GM12878 (cell line): ENCODE measurements at regions of chr2 and their contacts with region 1.

Region 1: DNA sequence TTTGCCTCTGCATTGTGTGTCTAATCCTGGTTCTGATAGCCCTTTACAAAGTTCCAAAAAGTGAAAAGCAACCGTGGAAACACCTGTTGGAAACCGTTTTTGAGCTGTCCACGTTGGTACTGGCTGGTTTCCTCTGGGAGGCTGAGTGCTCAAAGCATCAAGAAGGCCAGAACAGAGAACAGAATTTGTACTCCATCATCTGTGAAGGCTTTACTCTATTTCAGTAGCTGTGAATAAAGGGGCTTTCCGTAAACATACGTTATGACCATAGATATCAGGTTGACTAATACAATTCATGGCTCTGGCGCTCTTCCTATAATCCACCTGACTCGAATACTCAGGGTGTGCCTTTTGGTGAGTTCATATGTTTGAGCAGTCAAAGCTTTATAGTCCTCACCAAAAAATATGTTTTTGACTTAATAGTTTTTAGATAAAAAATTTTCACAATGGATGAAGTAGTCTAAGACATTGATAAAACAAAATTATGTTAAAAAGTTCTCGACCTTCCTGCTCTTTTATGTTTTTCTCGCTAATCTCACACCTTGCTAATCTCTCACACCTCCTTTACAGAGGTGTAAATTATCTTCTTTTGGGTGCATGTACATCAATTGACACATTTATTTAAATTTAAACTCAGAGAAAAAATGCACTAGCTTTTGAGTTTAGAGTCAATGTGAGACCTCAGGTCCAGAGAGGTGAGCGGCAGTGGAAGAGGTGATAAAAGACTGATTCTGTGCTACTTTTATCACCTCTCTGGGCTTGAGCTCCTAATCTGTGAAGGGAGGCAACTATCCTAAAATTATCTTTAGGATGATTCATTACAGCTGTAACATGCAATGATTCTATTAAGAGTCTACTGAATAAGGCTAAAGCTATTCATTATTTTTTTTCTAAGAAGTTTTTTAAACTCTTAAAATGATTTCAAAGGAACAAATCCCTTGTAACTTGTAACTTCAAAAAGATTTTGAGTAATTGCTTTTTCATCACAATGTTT is 65.3 kb downstream of the CXCR4 start:
- DNase-seq: no peak
- ATAC-seq: peak; percentile 67
- H3K4me3 ChIP-seq: no peak overlapping the region
- H3K27ac ChIP-seq: peak overlapping the region; percentile 42
- H3K4me1 ChIP-seq: peaks cover 36% of the 10 kb centered on the region
- H3K27me3 ChIP-seq: no peaks in the 10 kb centered on the region
- CTCF ChIP-seq: no peak
- EP300 ChIP-seq: peak in 1 of 2 experiments; percentile 77; a peak in 2 of 4 replicates
- POLR2A ChIP-seq: no peak
- RAD21 ChIP-seq: 0 out of 2 replicates have a peak, but pooled peaks have one; percentile 1

Region 2: DNA sequence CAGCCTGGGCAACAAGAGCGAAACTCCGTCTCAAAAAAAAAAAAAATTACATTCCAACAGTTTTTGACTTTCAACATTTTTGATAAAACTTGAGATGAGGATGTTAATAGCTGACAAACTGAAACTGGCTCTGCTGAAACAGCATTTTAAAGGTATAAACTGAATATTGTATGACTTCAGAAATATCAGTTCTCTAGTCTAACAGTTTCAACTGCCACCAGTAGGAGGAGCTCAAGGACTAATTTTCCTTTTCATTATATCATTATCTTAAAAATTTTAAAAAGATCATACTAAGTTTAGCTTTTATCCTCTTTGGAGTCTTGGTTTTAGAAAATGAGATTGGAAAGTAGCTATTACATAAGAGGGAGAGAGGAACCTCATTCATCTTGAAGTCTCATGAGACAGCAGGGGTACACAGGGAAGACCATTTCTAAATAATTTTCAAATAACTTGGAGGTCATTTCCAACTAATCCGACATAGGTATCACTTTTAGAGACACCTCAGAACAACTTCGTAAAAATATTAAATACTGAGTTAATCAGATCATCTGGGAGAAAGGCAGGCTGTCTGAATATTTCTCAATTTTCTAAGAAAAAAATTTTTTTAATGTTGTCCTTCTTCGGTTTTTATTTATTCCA is 138.8 kb before region 1 on chr2:
- CTCF ChIA-PET with region 1: interaction called, 26 read pairs
- POLR2A ChIA-PET with region 1: interaction called, 3 read pairs
- RAD21 ChIA-PET with region 1: interaction called, 17 read pairs
- SMC1A ChIA-PET with region 1: interaction called, 37 read pairs
- in situ Hi-C with region 1: no loop called
- intact Hi-C with region 1: loop called (anchors 2 kb)
- DNase-seq: no peak
- ATAC-seq: peak; percentile 75
- H3K4me3 ChIP-seq: no peak overlapping the region
- H3K27ac ChIP-seq: no peak overlapping the region
- H3K4me1 ChIP-seq: no peaks in the 10 kb centered on the region
- H3K27me3 ChIP-seq: no peaks in the 10 kb centered on the region
- CTCF ChIP-seq: peak; percentile 58 to 68 (median 63); a peak in 5 of 6 replicates
- EP300 ChIP-seq: no peak
- POLR2A ChIP-seq: no peak
- RAD21 ChIP-seq: peak; percentile 75

Region 3: GRCh38 chr2:136008205-136008865 is 44.3 kb before region 1 on chr2:
- CTCF ChIA-PET with region 1: interaction called, 5 read pairs
- POLR2A ChIA-PET with region 1: interaction called, 35 read pairs
- RAD21 ChIA-PET with region 1: interaction called, 20 read pairs
- SMC1A ChIA-PET with region 1: interaction called, 961 read pairs
- in situ Hi-C with region 1: no loop called
- intact Hi-C with region 1: no loop called
- DNase-seq: no peak
- ATAC-seq: peak; percentile 69
- H3K4me3 ChIP-seq: no peak overlapping the region
- H3K27ac ChIP-seq: no peak overlapping the region
- H3K4me1 ChIP-seq: peaks cover 9% of the 10 kb centered on the region
- H3K27me3 ChIP-seq: no peaks in the 10 kb centered on the region
- CTCF ChIP-seq: no peak
- EP300 ChIP-seq: peak in 1 of 2 experiments; percentile 33; a peak in 1 of 4 replicates
- POLR2A ChIP-seq: no peak
- RAD21 ChIP-seq: no peak

Region 4: GRCh38 chr2:136034629-136035028 is 18.0 kb before region 1 on chr2:
- CTCF ChIA-PET with region 1: interaction called, 21 read pairs
- POLR2A ChIA-PET with region 1: interaction called, 80 read pairs
- RAD21 ChIA-PET with region 1: interaction called, 348 read pairs
- SMC1A ChIA-PET with region 1: interaction called, 961 read pairs
- in situ Hi-C with region 1: no loop called
- intact Hi-C with region 1: loop called (anchors 1 kb)
- DNase-seq: no peak
- ATAC-seq: peak; percentile 78
- H3K4me3 ChIP-seq: no peak overlapping the region
- H3K27ac ChIP-seq: no peak overlapping the region
- H3K4me1 ChIP-seq: peaks cover under 1% of the 10 kb centered on the region; the same call in 1 of the 2 replicates
- H3K27me3 ChIP-seq: 0 out of 4 replicates have a peak, but pooled peaks cover 0 to 2% of the 10 kb centered on the region in 2 experiments
- CTCF ChIP-seq: no peak
- EP300 ChIP-seq: no peak
- POLR2A ChIP-seq: no peak
- RAD21 ChIP-seq: no peak

Region 5: DNA sequence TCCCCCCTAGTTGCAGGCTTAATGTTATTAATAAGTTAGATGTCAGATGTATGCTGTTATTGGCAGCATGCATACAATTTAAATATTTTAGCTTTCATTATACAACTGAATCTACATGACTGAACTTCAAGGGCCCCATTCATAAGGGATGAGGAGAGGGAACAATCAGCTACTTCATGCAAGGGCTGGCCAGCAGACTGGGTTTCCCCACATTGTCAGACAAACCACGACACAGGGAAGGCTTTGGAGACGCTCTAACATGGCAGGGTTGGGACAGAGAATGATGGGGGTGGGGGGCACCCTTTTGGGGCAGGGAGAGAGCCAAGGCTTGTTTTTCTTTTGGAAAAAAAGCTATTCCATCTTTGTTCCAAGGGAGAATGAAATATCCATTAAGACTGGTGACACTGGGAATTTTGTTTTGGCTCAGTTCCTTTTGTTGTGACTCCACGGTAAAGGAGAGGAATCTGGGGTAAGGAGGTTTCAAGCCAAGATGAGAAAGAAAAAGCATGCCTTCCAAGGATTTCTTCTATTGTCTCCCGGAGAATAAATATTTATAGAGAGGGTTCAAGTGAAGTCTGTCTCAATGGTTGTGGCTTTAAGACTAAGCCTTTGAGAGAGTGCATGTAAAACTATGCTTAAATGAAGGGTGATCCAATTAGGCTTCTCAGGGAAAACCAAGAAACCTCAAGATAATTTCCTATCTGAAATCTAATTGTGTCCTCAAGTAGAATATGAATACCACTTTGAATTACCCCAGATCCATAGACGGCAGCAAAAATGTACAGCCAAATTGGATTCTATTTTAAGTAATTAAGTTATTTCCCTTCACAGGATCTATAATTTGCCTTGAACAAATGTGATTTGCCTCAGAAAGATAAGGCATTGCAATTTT is 59.9 kb after region 1 on chr2:
- CTCF ChIA-PET with region 1: interaction called, 103 read pairs
- POLR2A ChIA-PET with region 1: interaction called, 23 read pairs
- RAD21 ChIA-PET with region 1: interaction called, 221 read pairs
- SMC1A ChIA-PET with region 1: interaction called, 400 read pairs
- in situ Hi-C with region 1: no loop called
- intact Hi-C with region 1: loop called (anchors 1 kb)
- DNase-seq: no peak
- ATAC-seq: peak; percentile 3; the same call in 2 of the 3 replicates
- H3K4me3 ChIP-seq: no peak overlapping the region
- H3K27ac ChIP-seq: no peak overlapping the region
- H3K4me1 ChIP-seq: peaks cover 5% of the 10 kb centered on the region; the same call in 1 of the 2 replicates
- H3K27me3 ChIP-seq: 0 out of 4 replicates have a peak, but pooled peaks cover 0 to 3% of the 10 kb centered on the region in 2 experiments
- CTCF ChIP-seq: no peak
- EP300 ChIP-seq: no peak
- POLR2A ChIP-seq: no peak
- RAD21 ChIP-seq: no peak

Region 6: DNA sequence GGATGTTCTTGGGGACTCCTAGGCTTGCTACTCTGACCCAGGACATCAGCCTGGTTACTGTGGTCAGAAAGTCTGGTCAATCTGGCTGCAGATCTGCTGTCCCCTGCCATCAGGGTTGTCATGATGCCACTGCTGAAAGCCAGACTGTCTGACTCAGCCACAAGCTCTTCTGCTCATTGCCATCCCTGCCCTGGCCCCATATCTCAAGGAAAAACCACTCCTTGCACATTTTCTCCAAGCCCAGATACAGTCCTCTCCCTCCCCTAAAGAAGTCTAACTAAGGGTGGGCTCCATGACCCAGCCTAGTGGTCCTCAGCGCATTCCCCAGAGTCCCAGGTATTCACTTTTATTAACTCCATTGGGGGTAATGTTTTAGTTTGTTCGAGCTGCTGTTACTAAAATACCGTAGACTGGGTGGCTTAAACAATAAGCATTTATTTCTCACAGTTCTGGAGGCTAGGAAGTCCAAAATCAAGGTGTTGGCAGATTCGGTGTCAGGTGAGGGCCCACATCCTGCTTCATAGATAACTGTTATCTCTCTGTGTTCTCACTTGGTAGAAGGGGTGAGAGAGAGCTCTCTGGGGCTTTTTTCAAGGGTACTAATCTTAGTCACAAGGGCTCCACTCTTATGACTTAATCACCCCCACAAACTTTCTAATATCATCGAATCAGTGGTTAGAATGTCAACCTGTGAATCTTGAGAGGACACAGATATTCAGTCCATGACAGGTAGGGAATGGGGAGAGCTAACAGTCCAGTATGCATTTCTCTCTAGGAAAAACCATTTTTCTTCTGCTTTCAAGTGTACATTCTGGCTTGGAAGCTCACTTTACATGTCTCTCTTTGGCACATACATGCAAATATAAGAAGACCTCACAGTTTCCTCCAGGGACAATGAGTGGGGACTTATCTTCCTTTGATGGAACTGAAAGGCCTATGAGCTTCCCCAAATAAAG is 160.0 kb after region 1 on chr2:
- CTCF ChIA-PET with region 1: interaction called, 7 read pairs
- POLR2A ChIA-PET with region 1: interaction called, 13 read pairs
- RAD21 ChIA-PET with region 1: interaction called, 78 read pairs
- SMC1A ChIA-PET with region 1: interaction called, 35 read pairs
- in situ Hi-C with region 1: no loop called
- intact Hi-C with region 1: loop called (anchors 2 kb)
- DNase-seq: peak; percentile 34
- ATAC-seq: peak; percentile 83
- H3K4me3 ChIP-seq: no peak overlapping the region
- H3K27ac ChIP-seq: no peak overlapping the region
- H3K4me1 ChIP-seq: peaks cover 4% of the 10 kb centered on the region
- H3K27me3 ChIP-seq: peaks cover 0 to 8% of the 10 kb centered on the region in 2 experiments; a peak in 2 of 4 replicates
- CTCF ChIP-seq: no peak
- EP300 ChIP-seq: peak in 1 of 2 experiments; percentile 78; a peak in 3 of 4 replicates
- POLR2A ChIP-seq: no peak
- RAD21 ChIP-seq: no peak

Region 7: GRCh38 chr2:136294059-136294458 is 241.4 kb after region 1 on chr2:
- CTCF ChIA-PET with region 1: no interaction called
- POLR2A ChIA-PET with region 1: no interaction called
- RAD21 ChIA-PET with region 1: no interaction called
- SMC1A ChIA-PET with region 1: no interaction called
- in situ Hi-C with region 1: no loop called
- intact Hi-C with region 1: no loop called
- DNase-seq: no peak
- ATAC-seq: no peak
- H3K4me3 ChIP-seq: no peak overlapping the region
- H3K27ac ChIP-seq: no peak overlapping the region
- H3K4me1 ChIP-seq: no peaks in the 10 kb centered on the region
- H3K27me3 ChIP-seq: 0 out of 4 replicates have a peak, but pooled peaks cover 0 to 2% of the 10 kb centered on the region in 2 experiments
- CTCF ChIP-seq: no peak
- EP300 ChIP-seq: no peak
- POLR2A ChIP-seq: no peak
- RAD21 ChIP-seq: no peak

Region 8: DNA sequence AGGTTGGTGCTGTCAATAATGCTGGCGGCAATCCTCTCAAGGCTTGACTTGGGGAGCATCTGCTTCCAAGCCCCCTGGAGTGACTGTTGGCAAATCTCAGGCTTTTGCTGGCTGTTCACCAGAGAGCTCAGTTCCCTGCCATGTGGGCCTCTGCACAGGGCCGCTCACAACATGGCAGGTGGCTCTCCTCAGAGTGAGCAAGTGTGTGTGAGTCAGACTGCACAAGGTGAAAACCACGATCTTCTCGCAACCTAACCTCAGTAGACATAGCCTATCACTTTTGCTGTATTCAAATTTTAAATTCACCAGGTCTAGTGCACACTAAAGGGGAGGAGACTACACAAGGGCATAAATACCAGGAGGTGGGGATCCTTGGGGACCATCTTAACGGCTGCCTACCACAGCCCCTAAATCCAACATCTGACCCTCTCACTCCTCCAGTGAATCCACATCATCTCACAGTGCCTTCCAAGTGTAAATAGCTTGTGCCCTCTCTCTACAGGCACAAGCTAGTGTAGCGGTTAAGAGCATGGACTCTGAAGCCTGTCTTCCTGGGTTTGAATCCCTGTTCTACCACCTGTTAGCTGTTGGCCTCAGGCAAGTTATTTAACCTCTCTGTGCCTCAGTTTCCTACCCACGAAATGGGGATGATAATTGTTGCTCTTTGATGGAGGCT is 253.0 kb after region 1 on chr2:
- CTCF ChIA-PET with region 1: interaction called, 3 read pairs
- POLR2A ChIA-PET with region 1: interaction called, 4 read pairs
- RAD21 ChIA-PET with region 1: interaction called, 11 read pairs
- SMC1A ChIA-PET with region 1: interaction called, 14 read pairs
- in situ Hi-C with region 1: no loop called
- intact Hi-C with region 1: loop called (anchors 2 kb)
- DNase-seq: no peak
- ATAC-seq: peak; percentile 93
- H3K4me3 ChIP-seq: no peak overlapping the region
- H3K27ac ChIP-seq: no peak overlapping the region
- H3K4me1 ChIP-seq: peaks cover 6% of the 10 kb centered on the region
- H3K27me3 ChIP-seq: peaks cover 0 to 5% of the 10 kb centered on the region in 2 experiments; a peak in 1 of 4 replicates
- CTCF ChIP-seq: no peak
- EP300 ChIP-seq: peak; percentile 62 to 64; a peak in 1 of 4 replicates
- POLR2A ChIP-seq: no peak
- RAD21 ChIP-seq: no peak